Endothelial cell of umbilical vein (primary cell): ENCODE measurements at regions of chr5 and their contacts with region 1.

Region 1: GRCh38 chr5:111530298-111530740 is 18.0 kb upstream of the STARD4 start:
- DNase-seq: peak; percentile 90
- H3K4me3 ChIP-seq: no peak overlapping the region
- H3K27ac ChIP-seq: peak overlapping the region; percentile 84
- H3K4me1 ChIP-seq: peaks cover 10% of the 10 kb centered on the region
- H3K27me3 ChIP-seq: no peaks in the 10 kb centered on the region
- CTCF ChIP-seq: no peak
- POLR2A ChIP-seq: no peak

Region 2: DNA sequence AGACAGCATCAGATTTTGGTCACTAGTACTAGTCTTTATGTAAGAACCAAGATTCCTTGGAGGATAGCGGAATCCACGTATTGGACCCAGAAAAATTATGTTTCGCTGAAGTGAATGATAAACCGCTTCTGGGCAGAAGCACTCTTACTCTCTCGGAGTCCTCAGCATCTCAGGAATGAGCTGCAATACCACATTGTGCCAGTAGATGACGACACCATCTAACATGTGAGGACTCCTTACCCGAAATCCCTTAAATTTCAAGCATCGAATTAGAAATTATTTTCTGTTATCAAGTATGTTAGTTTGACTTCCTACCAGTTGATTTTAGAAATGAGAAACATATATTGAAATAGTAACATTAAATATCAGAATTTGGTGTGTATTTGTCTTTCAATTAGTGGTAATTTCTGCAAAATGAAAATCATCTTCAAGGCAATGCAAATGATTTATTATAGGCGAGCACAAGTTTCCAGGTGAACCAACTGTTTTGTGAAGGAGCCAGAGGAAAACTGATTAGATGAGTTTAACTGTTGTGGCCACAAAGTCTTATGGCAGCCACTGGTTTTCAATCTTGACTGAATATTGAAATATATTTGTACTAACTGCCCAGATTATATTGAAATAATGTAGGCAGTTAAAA is 372.1 kb before region 1 on chr5:
- CTCF ChIA-PET with region 1: interaction called, 11 read pairs
- POLR2A ChIA-PET with region 1: no interaction called
- dilution Hi-C with region 1: no loop called
- intact Hi-C with region 1: no loop called
- DNase-seq: peak; percentile 84
- H3K4me3 ChIP-seq: no peak overlapping the region
- H3K27ac ChIP-seq: no peak overlapping the region
- H3K4me1 ChIP-seq: no peaks in the 10 kb centered on the region
- H3K27me3 ChIP-seq: no peaks in the 10 kb centered on the region
- CTCF ChIP-seq: peak; percentile 91 to 98
- POLR2A ChIP-seq: no peak

Region 3: DNA sequence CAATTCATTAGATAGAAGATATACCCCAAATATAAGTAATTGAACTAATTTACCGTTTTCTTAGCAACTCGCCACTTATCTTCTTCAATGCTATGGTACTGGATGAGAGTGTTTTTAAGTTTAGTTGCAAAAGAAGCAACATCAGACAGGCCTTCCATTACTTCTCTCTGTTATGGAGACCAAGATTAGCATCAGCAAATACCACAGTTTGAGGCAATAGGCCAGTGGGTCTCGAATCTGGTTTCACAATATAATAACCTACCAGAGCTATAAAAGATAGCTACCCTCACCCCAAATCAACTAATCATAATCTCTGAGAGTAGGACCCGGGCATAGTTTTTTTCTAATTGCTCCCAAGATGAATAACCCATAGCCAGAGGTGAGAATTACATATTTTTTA is 23.0 kb before region 1 on chr5:
- CTCF ChIA-PET with region 1: interaction called, 64 read pairs
- POLR2A ChIA-PET with region 1: no interaction called
- dilution Hi-C with region 1: no loop called
- intact Hi-C with region 1: loop called (anchors 1 kb)
- DNase-seq: no peak
- H3K4me3 ChIP-seq: no peak overlapping the region
- H3K27ac ChIP-seq: no peak overlapping the region
- H3K4me1 ChIP-seq: peaks cover 22% of the 10 kb centered on the region
- H3K27me3 ChIP-seq: no peaks in the 10 kb centered on the region
- CTCF ChIP-seq: no peak
- POLR2A ChIP-seq: no peak

Region 4: GRCh38 chr5:111517853-111518501 is 12.3 kb before region 1 on chr5:
- CTCF ChIA-PET with region 1: interaction called, 64 read pairs
- POLR2A ChIA-PET with region 1: interaction called, 4 read pairs
- dilution Hi-C with region 1: no loop called
- intact Hi-C with region 1: no loop called
- DNase-seq: no peak
- H3K4me3 ChIP-seq: no peak overlapping the region
- H3K27ac ChIP-seq: no peak overlapping the region
- H3K4me1 ChIP-seq: peaks cover 10% of the 10 kb centered on the region
- H3K27me3 ChIP-seq: no peaks in the 10 kb centered on the region
- CTCF ChIP-seq: no peak
- POLR2A ChIP-seq: no peak

Region 5: DNA sequence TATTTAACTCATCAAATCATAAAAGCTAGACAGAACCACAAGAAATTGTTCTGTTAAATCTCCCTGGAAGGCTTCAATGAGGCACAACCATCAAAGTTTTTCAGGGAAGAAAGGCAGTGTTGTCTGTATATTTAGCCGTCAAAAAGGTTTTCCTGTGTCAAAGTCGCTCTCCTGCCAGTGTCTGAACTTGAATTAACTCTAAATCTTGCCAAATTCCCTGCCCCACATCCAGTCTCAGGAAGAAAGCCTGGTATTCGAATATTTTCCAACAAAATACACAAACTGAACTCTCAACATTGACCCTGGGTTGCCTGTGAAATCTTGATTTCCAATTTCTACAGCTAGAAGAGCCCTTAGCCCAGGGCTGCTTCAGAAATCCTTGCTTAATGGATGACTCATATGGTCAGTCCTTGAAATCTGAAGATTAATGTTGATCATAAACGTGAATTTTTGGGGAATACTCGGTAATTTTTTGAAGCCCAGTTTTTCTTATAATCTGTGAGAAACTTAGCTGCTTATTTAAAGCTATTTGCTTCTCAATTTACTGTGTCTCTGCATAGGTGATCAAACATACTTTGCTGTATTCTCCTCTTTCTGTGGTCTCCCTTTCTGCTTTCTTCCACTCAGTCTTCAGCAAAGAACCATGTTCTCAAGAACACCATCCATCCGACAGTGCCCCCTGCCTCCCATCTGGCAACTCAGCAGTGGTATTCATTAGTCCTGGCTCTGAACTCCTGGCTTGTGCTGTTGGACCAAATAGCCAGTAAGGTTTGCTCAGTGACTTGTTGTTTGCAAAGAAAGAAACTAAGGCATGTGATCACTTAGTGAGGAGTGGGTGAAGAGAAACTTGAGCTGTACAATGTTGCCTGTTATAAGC is 167.8 kb after region 1 on chr5:
- CTCF ChIA-PET with region 1: interaction called, 20 read pairs
- POLR2A ChIA-PET with region 1: no interaction called
- dilution Hi-C with region 1: no loop called
- intact Hi-C with region 1: loop called (anchors 1 kb)
- DNase-seq: peak; percentile 88
- H3K4me3 ChIP-seq: no peak overlapping the region
- H3K27ac ChIP-seq: peak overlapping the region; percentile 49
- H3K4me1 ChIP-seq: peaks cover 12% of the 10 kb centered on the region
- H3K27me3 ChIP-seq: no peaks in the 10 kb centered on the region
- CTCF ChIP-seq: peak; percentile 57 to 59
- POLR2A ChIP-seq: no peak

Region 6: DNA sequence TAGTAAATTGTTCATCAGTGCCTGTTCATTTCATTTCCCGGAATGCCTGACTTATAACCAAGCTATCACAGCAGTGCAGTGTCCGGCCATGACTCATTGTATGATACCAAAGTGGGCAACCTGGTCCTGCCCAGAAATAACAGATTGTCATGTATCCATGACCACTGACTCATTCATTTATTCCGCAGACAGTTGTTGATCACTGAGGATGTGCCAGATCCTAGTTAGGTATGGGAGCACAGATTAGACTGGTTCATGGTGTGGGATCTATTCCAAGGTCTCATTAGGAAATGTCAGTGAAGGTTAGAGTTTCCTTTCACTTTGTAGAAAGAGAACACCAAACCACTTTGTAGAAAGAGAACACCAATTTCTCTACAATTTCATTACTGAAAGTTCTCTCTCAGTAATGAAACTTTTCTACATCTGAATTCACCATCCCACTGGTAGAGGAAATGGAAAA is 218.0 kb after region 1 on chr5:
- CTCF ChIA-PET with region 1: interaction called, 14 read pairs
- POLR2A ChIA-PET with region 1: interaction called, 5 read pairs
- dilution Hi-C with region 1: no loop called
- intact Hi-C with region 1: loop called (anchors 2 kb)
- DNase-seq: peak; percentile 95
- H3K4me3 ChIP-seq: peak overlapping the region in 1 of 3 experiments; percentile 29
- H3K27ac ChIP-seq: peak overlapping the region; percentile 71
- H3K4me1 ChIP-seq: peaks cover 26% of the 10 kb centered on the region
- H3K27me3 ChIP-seq: no peaks in the 10 kb centered on the region
- CTCF ChIP-seq: no peak
- POLR2A ChIP-seq: no peak

Region 7: GRCh38 chr5:112146323-112147226 is 616.3 kb after region 1 on chr5:
- CTCF ChIA-PET with region 1: interaction called, 65 read pairs
- POLR2A ChIA-PET with region 1: no interaction called
- dilution Hi-C with region 1: no loop called
- intact Hi-C with region 1: loop called (anchors 1 kb)
- DNase-seq: peak; percentile 81
- H3K4me3 ChIP-seq: no peak overlapping the region
- H3K27ac ChIP-seq: no peak overlapping the region
- H3K4me1 ChIP-seq: peaks cover 13% of the 10 kb centered on the region
- H3K27me3 ChIP-seq: no peaks in the 10 kb centered on the region
- CTCF ChIP-seq: peak; percentile 45 to 49
- POLR2A ChIP-seq: no peak